Naive thymus-derived CD8-positive, alpha-beta T cell (primary cell): ENCODE measurements at regions of chr3 and their contacts with region 1.

Region 1: DNA sequence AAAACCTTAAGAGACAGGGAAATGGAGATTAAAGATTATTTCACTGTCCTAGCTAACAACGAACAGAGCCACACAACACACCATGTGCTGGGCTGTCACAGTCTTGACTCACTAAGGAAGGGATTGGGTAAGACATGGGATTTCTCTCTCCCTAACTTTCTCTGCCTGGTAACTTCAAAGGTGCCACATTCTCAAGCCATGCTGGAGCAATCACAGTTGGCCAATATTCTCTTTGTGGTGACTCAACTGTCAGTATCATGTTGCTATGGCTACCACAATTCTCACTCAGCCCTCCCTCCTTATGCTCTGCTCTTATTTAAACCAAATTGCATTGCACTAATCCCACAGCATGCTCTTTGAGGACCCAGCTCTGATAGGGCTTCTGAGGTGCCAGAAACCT is 74.0 kb downstream of the OXNAD1 start:
- DNase-seq: peak in 3 of 10 donors; percentile 24 to 38 (median 28)
- ATAC-seq: peak; percentile 49 to 51
- H3K4me3 Mint-ChIP-seq: peak overlapping the region in 8 of 10 donors; percentile 17 to 73 (median 60)
- H3K27ac Mint-ChIP-seq: peak overlapping the region; percentile 77 to 98 (median 90)
- H3K4me1 Mint-ChIP-seq: peaks cover 49 to 82% (median 76%) of the 10 kb centered on the region in 4 donors
- H3K27me3 Mint-ChIP-seq: no peaks in the 10 kb centered on the region

Region 2: GRCh38 chr3:16300881-16301359 is 38.1 kb before region 1 on chr3:
- POLR2A ChIA-PET with region 1: interaction called, 11 read pairs
- DNase-seq: peak in 9 of 10 donors; percentile 49 to 87 (median 75)
- ATAC-seq: peak; percentile 68 to 82
- H3K4me3 Mint-ChIP-seq: peak overlapping the region; percentile 84 to 100 (median 93)
- H3K27ac Mint-ChIP-seq: peak overlapping the region; percentile 86 to 99 (median 96)
- H3K4me1 Mint-ChIP-seq: peaks cover 52 to 99% (median 96%) of the 10 kb centered on the region in 4 donors
- H3K27me3 Mint-ChIP-seq: no peaks in the 10 kb centered on the region